OCI-LY7 (cell line): ENCODE measurements at regions of chr14 and their contacts with region 1.

Region 1: DNA sequence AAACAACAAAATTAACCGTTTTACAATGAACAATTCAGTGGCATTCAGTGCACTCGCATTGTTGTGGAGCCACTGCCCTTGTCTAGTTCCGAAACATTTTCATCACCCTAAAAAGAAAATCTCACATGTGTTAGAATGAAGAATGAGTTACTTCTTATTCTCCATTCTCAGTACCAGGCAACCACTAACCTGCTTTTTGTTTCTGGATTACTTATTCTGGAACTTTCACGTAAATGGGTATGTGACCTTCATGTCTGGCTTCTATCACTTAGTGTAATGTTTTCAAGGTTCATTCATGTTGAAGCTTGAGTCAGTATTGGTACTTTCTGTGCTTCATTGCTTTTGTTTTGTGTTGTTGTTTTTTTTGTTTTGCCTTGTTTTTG is 15.6 kb downstream of the RCOR1 start:
- DNase-seq: no peak
- H3K4me3 ChIP-seq: peak overlapping the region; percentile 6
- H3K27ac ChIP-seq: peak overlapping the region; percentile 33
- H3K4me1 ChIP-seq: peaks cover 71% of the 10 kb centered on the region
- CTCF ChIP-seq: no peak

Region 2: DNA sequence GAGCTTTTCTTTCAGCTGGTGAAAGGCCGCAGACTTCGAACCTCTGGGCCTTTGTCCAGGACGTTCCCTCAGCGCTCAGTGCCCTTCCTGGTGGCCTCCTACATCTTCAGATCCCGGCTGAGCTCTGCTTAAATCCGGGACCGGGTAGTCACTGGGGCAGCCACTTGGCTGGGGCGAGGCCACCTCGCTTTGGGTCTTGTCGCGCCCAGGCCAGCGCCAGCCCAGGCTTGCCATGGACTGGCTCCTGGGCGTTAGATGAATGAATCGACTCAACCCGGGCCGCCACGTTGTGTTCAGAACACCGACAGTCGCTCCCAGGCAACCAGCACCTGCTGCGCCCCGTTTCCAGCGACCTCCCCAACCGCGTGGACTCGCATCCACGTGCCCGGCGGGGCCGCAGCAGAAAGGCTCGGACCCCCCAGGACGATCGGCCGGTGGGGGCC is 53.2 kb before region 1 on chr14:
- CTCF ChIA-PET with region 1: interaction called, 10 read pairs
- POLR2A ChIA-PET with region 1: no interaction called
- intact Hi-C with region 1: no loop called
- DNase-seq: no peak
- H3K4me3 ChIP-seq: no peak overlapping the region
- H3K27ac ChIP-seq: no peak overlapping the region
- H3K4me1 ChIP-seq: no peaks in the 10 kb centered on the region
- CTCF ChIP-seq: no peak

Region 3: GRCh38 chr14:102645746-102646440 is 37.8 kb after region 1 on chr14:
- CTCF ChIA-PET with region 1: interaction called, 4 read pairs
- POLR2A ChIA-PET with region 1: interaction called, 6 read pairs
- intact Hi-C with region 1: loop called (anchors 5 kb)
- DNase-seq: peak; percentile 32
- H3K4me3 ChIP-seq: peak overlapping the region; percentile 12
- H3K27ac ChIP-seq: peak overlapping the region; percentile 40
- H3K4me1 ChIP-seq: peaks cover 45% of the 10 kb centered on the region
- CTCF ChIP-seq: no peak